Psoas muscle (tissue), 8 donors: ENCODE measurements at regions of chr1 and their contacts with region 1.

Region 1: DNA sequence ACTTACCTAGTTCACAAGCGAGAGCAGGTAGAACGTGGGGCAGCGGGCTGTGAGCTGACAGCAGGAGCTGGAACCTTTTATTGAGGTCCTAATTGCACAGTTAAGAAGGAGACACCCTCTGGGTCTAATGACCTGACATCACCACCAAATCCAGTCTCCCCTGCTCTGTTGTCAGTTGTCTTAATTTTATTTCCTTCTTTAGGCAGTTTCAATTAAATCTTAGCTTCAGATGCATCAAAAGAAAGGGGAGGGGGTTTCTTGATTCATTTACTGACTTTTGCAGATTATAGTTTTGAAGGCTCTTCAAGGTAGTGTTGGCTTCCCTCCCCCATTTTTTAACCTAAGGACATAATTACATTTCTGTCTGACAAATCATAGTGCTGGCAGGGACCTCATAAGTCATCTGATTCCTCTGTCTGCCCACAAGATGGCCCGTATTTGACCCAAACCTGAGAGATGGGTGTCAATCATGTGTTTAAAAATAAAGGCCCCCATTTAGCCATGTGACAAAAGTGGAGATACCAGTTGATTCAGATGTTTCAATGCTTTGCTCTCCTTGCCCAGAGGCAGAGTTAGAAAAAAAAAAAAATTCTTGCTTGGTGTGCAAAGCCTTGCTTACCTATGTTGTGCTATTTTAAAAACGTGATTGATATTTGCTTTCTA is at the start of gene TCHHL1:
- DNase-seq: no peak
- ATAC-seq: no peak
- H3K4me3 ChIP-seq: no peak within 1 kb of the TSS
- H3K27ac ChIP-seq: no peak within 1 kb of the TSS
- H3K4me1 ChIP-seq: no peaks in the 10 kb centered on the region
- H3K27me3 ChIP-seq: peaks cover 0 to 11% (median 5%) of the 10 kb centered on the region in 3 donors
- CTCF ChIP-seq: no peak
- total RNA-seq, gene TCHHL1: not detected

Region 2: DNA sequence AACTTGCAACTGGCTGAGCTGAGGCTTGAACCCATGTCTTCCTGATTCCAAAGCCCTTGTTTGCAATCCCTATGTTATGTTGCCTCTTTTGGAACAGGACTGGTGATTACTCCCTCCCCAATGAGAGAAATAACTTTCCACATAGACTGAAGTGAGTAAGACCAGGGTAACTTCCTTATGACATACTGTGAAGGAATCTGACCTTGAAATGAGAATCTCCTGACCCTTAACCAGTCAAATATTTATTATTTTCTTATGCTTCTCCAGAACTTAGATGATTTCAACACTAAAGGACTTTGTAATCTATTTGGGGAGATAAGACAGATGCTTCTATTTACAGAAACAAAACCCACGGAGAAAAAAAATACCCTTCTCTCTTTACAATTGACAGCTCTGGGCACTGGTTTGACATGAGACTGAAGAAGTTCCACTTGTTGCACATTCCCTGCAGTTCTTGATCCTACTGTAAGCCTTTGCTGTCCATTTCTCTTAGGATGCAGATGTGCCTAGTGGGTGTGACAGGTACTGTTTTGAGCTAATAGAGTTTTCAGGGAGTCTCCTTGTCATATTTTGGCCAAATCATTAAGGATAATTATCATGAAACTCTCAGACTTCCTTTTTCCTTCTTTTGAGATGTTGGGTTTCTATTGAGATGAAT is 73.8 kb after region 1 on chr1:
- intact Hi-C with region 1: loop called in 1 of 2 experiments (anchors 2 kb)
- DNase-seq: no peak
- ATAC-seq: no peak
- H3K4me3 ChIP-seq: no peak overlapping the region
- H3K27ac ChIP-seq: no peak overlapping the region
- H3K4me1 ChIP-seq: no peaks in the 10 kb centered on the region
- H3K27me3 ChIP-seq: peaks cover 0 to 2% (median 0%) of the 10 kb centered on the region in 3 donors
- CTCF ChIP-seq: no peak